SK-N-SH (cell line): ENCODE measurements at regions of chr5 and their contacts with region 1.

Region 1: DNA sequence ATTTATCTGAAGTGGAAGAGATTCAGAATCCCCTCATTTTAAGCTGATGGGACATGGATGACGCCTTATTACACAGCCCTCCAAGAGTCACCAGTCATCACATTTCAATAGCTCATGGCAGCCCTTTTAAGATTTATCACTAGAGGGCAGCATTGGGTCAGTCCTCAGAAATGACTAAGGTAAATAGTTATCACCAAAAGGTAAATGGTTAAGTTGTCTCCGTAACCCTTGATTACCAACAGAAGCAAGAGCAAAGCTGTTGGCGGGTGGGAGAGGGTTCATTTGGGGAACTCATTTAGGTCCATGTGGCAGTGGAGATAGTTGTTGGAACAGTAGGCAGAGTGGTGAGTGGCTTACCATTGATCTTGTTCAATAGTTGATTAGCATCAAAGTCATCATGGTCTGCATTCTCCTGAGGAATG is 12.0 kb upstream of the C9 start:
- DNase-seq: peak; percentile 30
- H3K4me3 ChIP-seq: no peak overlapping the region; a peak in 1 of 4 replicates
- H3K27ac ChIP-seq: no peak overlapping the region
- H3K4me1 ChIP-seq: no peaks in the 10 kb centered on the region
- H3K27me3 ChIP-seq: no peaks in the 10 kb centered on the region
- CTCF ChIP-seq: peak; percentile 89
- EP300 ChIP-seq: no peak
- RAD21 ChIP-seq: peak; percentile 73

Region 2: DNA sequence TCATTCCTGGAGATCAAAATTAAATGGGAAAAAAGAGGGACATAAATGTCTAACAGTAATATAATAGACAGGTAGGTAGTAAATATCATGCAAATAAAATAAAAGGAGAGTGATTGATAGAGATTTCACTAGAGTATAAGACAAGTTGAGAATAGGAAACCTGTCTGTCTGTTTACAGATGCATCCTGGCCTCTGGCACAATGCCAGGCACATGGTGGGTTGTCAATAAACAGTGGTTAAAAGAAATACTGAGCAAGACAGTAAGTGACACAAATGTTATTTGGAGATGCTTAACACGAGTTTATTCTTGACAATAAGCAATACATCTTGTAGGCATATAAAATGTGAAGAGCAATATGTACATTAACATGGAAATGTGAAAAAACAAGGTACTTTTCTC is 335.4 kb before region 1 on chr5:
- CTCF ChIA-PET with region 1: no interaction called
- POLR2A ChIA-PET with region 1: no interaction called
- DNase-seq: no peak
- H3K4me3 ChIP-seq: no peak overlapping the region
- H3K27ac ChIP-seq: no peak overlapping the region
- H3K4me1 ChIP-seq: no peaks in the 10 kb centered on the region; a peak in 1 of 4 replicates
- H3K27me3 ChIP-seq: no peaks in the 10 kb centered on the region
- CTCF ChIP-seq: no peak
- EP300 ChIP-seq: no peak
- RAD21 ChIP-seq: no peak

Region 3: DNA sequence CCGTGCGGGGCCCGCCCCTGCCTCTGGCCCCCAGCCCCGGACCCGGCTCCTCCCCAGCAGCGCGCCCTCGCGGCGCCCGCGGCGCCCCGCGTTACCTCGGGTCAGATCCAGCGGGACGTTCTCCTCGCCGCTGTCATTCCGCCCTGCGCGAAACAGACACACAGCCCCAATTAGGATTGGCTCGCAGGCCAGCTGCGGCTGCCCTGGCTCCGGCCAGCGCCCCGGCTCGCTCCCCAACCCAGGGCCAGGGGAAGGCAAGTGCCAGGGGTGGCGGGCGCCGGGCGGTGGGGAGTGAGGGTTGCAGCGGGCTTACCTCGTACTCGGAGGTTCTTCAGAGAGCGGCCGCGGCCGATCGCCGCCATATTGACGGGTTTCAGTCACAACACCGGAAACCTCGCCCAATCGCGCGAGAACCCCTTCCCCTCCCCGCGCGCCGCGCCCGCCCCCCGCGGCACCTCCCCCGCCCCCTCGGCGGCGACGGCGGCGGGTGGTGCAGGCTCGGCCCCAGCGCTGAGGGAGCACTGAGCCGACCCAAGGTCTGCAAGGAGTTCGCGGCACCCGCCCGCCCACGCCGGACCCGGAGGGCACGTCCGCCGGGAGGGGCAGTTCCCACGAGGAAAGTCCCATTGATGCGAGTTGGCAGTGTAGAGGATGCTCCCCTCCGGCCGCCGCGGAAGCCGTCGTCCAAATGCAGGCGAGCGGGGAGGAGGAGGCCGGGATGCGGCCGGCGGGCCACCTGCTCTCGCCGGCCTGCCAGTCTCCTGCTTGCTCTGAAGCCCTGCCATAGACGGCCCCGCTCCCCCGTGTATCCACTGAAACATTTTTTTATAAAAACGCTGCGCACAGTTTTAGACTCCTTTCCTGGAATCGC is 302.1 kb before region 1 on chr5 and contains the start of gene RICTOR:
- CTCF ChIA-PET with region 1: no interaction called
- POLR2A ChIA-PET with region 1: no interaction called
- DNase-seq: peak; percentile 97
- H3K4me3 ChIP-seq: peak within 1 kb of the TSS; percentile 84 to 94
- H3K27ac ChIP-seq: peak within 1 kb of the TSS; percentile 92 to 94
- H3K4me1 ChIP-seq: peaks cover 0 to 12% of the 10 kb centered on the region in 2 experiments; a peak in 2 of 4 replicates
- H3K27me3 ChIP-seq: no peaks in the 10 kb centered on the region
- CTCF ChIP-seq: no peak
- EP300 ChIP-seq: 0 out of 4 replicates have a peak, but pooled peaks of 1 of the 2 experiments have one; percentile 5
- RAD21 ChIP-seq: no peak
- polyA plus RNA-seq, gene RICTOR: 1.6 and 2.6 TPM in 2 replicates

Region 4: GRCh38 chr5:39302472-39302871 is 73.8 kb before region 1 on chr5:
- CTCF ChIA-PET with region 1: no interaction called
- POLR2A ChIA-PET with region 1: no interaction called
- DNase-seq: no peak
- H3K4me3 ChIP-seq: no peak overlapping the region
- H3K27ac ChIP-seq: no peak overlapping the region
- H3K4me1 ChIP-seq: no peaks in the 10 kb centered on the region
- H3K27me3 ChIP-seq: peaks cover 17% of the 10 kb centered on the region; the same call in 1 of the 2 replicates
- CTCF ChIP-seq: no peak
- EP300 ChIP-seq: no peak
- RAD21 ChIP-seq: no peak

Region 5: GRCh38 chr5:39361306-39361705 is 15.0 kb before region 1 on chr5:
- CTCF ChIA-PET with region 1: interaction called, 11 read pairs
- POLR2A ChIA-PET with region 1: no interaction called
- DNase-seq: no peak
- H3K4me3 ChIP-seq: no peak overlapping the region
- H3K27ac ChIP-seq: peak overlapping the region in 1 of 2 experiments; percentile 68; a peak in 2 of 4 replicates
- H3K4me1 ChIP-seq: peaks cover 0 to 4% of the 10 kb centered on the region in 2 experiments; a peak in 1 of 4 replicates
- H3K27me3 ChIP-seq: no peaks in the 10 kb centered on the region
- CTCF ChIP-seq: no peak
- EP300 ChIP-seq: no peak
- RAD21 ChIP-seq: no peak

Region 6: GRCh38 chr5:39396822-39397221 is 20.5 kb after region 1 on chr5:
- CTCF ChIA-PET with region 1: interaction called, 10 read pairs
- POLR2A ChIA-PET with region 1: no interaction called
- DNase-seq: no peak
- H3K4me3 ChIP-seq: no peak overlapping the region
- H3K27ac ChIP-seq: no peak overlapping the region
- H3K4me1 ChIP-seq: peaks cover 0 to 50% of the 10 kb centered on the region in 2 experiments; a peak in 3 of 4 replicates
- H3K27me3 ChIP-seq: no peaks in the 10 kb centered on the region
- CTCF ChIP-seq: no peak
- EP300 ChIP-seq: no peak
- RAD21 ChIP-seq: no peak

Region 7: GRCh38 chr5:39547553-39548154 is 171.3 kb after region 1 on chr5:
- CTCF ChIA-PET with region 1: interaction called, 34 read pairs
- POLR2A ChIA-PET with region 1: no interaction called
- DNase-seq: peak; percentile 14
- H3K4me3 ChIP-seq: no peak overlapping the region; a peak in 1 of 4 replicates
- H3K27ac ChIP-seq: no peak overlapping the region
- H3K4me1 ChIP-seq: peaks cover 0 to 10% of the 10 kb centered on the region in 2 experiments; a peak in 1 of 4 replicates
- H3K27me3 ChIP-seq: no peaks in the 10 kb centered on the region
- CTCF ChIP-seq: peak; percentile 86
- EP300 ChIP-seq: no peak
- RAD21 ChIP-seq: peak; percentile 68